Activated CD4-positive, alpha-beta T cell treated with anti-CD3 and anti-CD28 coated beads for 36 hours (primary cell): ENCODE measurements at regions of chr13 and their contacts with region 1.

Region 1: GRCh38 chr13:75326173-75327134 is 155.5 kb downstream of the TBC1D4 start:
- DNase-seq: peak; percentile 79
- ATAC-seq: peak; percentile 87
- H3K4me3 Mint-ChIP-seq: peak overlapping the region; percentile 88
- H3K27ac Mint-ChIP-seq: peak overlapping the region; percentile 98
- H3K4me1 Mint-ChIP-seq: peaks cover 35% of the 10 kb centered on the region
- H3K27me3 Mint-ChIP-seq: no peaks in the 10 kb centered on the region

Region 2: DNA sequence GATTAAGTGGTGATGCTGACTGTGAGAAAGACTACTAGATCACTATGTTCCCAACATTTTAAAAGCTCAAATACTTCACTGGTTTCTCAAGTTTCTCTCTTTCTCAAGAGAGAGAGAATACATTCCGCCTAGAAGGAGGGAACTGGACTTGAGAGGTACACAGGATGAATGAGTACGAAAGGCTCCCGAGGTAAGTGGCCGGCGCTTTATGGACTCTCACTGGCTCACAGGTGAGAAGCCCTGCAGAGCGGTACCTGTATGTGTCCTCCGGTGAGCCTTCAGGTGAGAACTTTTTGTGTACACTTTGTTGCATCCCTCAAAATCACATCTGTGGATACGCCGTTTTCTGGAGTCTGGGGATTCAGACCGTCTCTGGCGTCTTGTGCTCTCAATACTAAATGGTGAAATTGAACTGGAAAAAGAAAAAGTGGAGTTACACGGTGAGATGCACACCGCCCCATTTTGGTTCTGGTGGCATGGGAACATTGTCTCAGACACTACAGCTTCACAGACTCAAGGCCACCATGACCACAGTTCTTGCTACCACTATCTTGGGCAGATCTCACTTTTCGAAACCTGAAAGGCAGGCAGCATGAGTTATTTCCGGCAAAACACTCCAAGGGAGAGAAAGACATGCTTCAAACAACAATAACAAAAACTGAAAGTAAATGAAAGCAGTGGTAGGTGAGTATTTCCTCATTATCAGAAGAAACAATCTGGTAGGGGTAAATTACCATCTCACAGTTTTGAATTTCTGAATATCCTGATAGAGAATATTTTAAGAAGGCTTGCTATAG is 1611.1 kb before region 1 on chr13:
- CTCF ChIA-PET with region 1: no interaction called
- POLR2A ChIA-PET with region 1: no interaction called
- intact Hi-C with region 1: loop called (anchors 5 to 10 kb)
- DNase-seq: peak; percentile 68
- ATAC-seq: peak; percentile 85
- H3K4me3 Mint-ChIP-seq: peak overlapping the region; percentile 50
- H3K27ac Mint-ChIP-seq: peak overlapping the region; percentile 83
- H3K4me1 Mint-ChIP-seq: peaks cover 53% of the 10 kb centered on the region
- H3K27me3 Mint-ChIP-seq: no peaks in the 10 kb centered on the region

Region 3: GRCh38 chr13:75357576-75358289 is 31.3 kb after region 1 on chr13:
- CTCF ChIA-PET with region 1: interaction called, 19 read pairs
- POLR2A ChIA-PET with region 1: interaction called, 3 read pairs
- intact Hi-C with region 1: no loop called
- DNase-seq: peak; percentile 74
- ATAC-seq: peak; percentile 99
- H3K4me3 Mint-ChIP-seq: no peak overlapping the region
- H3K27ac Mint-ChIP-seq: no peak overlapping the region
- H3K4me1 Mint-ChIP-seq: peaks cover 5% of the 10 kb centered on the region
- H3K27me3 Mint-ChIP-seq: no peaks in the 10 kb centered on the region

Region 4: DNA sequence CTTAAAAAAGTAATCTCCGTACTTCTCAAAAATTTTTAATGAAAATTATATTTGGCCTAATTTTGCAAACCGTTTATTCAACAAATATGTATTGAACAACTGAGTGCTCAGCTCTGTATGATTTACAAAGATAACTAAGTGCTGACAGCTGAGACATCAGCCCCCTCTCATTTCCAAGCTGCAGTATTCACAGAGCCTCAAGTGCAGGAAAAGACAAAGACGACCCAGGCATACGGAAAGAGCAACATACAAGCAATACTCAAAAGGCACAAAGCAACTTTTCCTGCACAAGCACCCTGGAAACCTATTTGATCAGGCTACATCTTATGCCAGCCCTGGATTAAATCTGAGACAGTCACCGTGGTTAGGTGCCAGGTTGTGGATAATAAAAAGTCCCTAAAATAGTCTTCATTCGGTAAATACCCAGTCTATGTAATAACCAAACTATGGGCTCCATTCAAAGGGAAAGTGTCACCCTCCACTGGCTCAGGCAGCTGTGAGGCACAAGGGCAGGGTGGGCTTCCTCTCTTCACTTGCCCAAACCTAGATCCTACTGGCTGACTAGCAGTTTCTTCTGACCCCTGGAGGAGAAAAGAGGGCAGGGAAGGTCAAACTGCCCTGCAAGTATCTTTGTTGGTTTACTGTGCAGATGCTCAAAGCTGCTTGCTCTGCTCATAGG is 90.0 kb after region 1 on chr13:
- CTCF ChIA-PET with region 1: no interaction called
- POLR2A ChIA-PET with region 1: no interaction called
- intact Hi-C with region 1: no loop called
- DNase-seq: no peak
- ATAC-seq: no peak
- H3K4me3 Mint-ChIP-seq: no peak overlapping the region
- H3K27ac Mint-ChIP-seq: no peak overlapping the region
- H3K4me1 Mint-ChIP-seq: no peaks in the 10 kb centered on the region
- H3K27me3 Mint-ChIP-seq: no peaks in the 10 kb centered on the region

Region 5: GRCh38 chr13:75482070-75482819 is 155.8 kb after region 1 on chr13 and contains the start of gene TBC1D4:
- CTCF ChIA-PET with region 1: interaction called, 6 read pairs
- POLR2A ChIA-PET with region 1: no interaction called
- intact Hi-C with region 1: loop called (anchors 5 kb)
- DNase-seq: peak; percentile 80
- ATAC-seq: peak; percentile 74
- H3K4me3 Mint-ChIP-seq: peak within 1 kb of the TSS; percentile 85
- H3K27ac Mint-ChIP-seq: peak within 1 kb of the TSS; percentile 33
- H3K4me1 Mint-ChIP-seq: peaks cover 20% of the 10 kb centered on the region
- H3K27me3 Mint-ChIP-seq: peaks cover 44% of the 10 kb centered on the region
- total RNA-seq, gene TBC1D4: 29.4 to 31.7 TPM

Region 6: DNA sequence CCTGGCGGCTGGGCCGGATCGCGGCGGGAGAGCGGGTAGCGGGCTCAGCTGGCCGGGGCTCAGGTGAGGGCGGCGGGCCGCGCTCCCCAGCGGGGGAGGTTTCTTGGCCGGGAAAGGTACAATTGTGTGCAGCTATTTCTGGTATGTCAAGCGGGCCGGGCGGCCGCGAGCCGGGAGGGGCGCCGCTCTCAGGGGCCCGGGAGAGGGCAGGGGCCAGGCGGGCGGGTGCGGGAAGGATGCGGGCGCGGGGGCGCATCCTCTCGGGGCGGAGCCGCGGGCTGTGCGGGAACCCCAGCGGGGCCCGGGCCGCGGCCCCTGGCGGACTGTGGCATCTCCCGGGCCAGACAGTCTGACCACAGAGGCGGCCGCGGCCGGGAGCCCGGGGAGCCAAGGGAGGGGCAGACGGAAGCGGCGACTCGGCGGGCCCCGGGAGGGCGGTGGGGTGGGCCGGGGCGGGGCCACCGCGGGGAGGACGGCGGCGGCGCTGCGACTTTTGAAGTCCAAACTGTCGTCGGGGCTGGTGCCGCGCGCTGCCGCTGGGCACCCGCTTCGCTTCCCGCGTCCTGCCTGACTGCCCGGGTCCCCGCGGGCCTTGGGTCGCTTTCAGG is 309.5 kb after region 1 on chr13 and contains the start of gene LMO7:
- CTCF ChIA-PET with region 1: no interaction called
- POLR2A ChIA-PET with region 1: no interaction called
- intact Hi-C with region 1: loop called in 1 of 2 experiments (anchors 5 kb)
- DNase-seq: peak; percentile 63
- ATAC-seq: peak; percentile 49
- H3K4me3 Mint-ChIP-seq: peak within 1 kb of the TSS; percentile 69
- H3K27ac Mint-ChIP-seq: no peak within 1 kb of the TSS
- H3K4me1 Mint-ChIP-seq: peaks cover 13% of the 10 kb centered on the region
- H3K27me3 Mint-ChIP-seq: peaks cover 18% of the 10 kb centered on the region
- total RNA-seq, gene LMO7: 11.7 to 15.5 TPM

Region 7: GRCh38 chr13:75739244-75739868 is 412.9 kb after region 1 on chr13:
- CTCF ChIA-PET with region 1: no interaction called
- POLR2A ChIA-PET with region 1: no interaction called
- intact Hi-C with region 1: no loop called
- DNase-seq: no peak
- ATAC-seq: peak; percentile 55
- H3K4me3 Mint-ChIP-seq: no peak overlapping the region
- H3K27ac Mint-ChIP-seq: no peak overlapping the region
- H3K4me1 Mint-ChIP-seq: peaks cover 16% of the 10 kb centered on the region
- H3K27me3 Mint-ChIP-seq: no peaks in the 10 kb centered on the region

Region 8: GRCh38 chr13:77026818-77027585 is 1700.5 kb after region 1 on chr13 and contains the start of gene FBXL3:
- CTCF ChIA-PET with region 1: no interaction called
- POLR2A ChIA-PET with region 1: no interaction called
- intact Hi-C with region 1: loop called in 1 of 2 experiments (anchors 5 kb)
- DNase-seq: peak; percentile 89
- ATAC-seq: peak; percentile 59
- H3K4me3 Mint-ChIP-seq: peak within 1 kb of the TSS; percentile 92
- H3K27ac Mint-ChIP-seq: peak within 1 kb of the TSS; percentile 96
- H3K4me1 Mint-ChIP-seq: peaks cover 47% of the 10 kb centered on the region
- H3K27me3 Mint-ChIP-seq: peaks cover 2% of the 10 kb centered on the region
- total RNA-seq, gene FBXL3: 28.4 to 31.6 TPM